Left ventricle myocardium superior (tissue), 1 donor: ENCODE measurements at regions of chr2 and their contacts with region 1.

Region 1: GRCh38 chr2:235779444-235779896 is 285.6 kb downstream of the AGAP1 start:
- DNase-seq: peak; percentile 80
- ATAC-seq: peak; percentile 91

Region 2: DNA sequence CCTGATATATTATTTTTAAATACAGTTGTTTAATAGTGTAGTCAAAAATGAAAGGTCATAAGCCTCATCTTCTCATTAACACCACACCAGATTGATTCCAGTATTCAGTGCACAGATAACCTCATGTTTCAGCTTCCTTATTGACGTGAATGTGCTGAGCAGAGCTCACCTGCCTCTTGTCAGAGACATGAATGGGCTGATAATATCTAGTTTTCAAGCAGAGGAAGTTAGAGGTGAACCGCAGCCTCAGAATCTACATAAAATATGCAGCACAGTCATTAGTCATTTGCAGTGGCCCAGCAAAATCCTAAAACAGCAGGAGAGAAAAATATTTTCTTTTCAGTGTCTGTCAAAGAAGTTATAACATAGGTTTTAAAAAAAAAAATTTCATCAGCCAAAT is 172.5 kb after region 1 on chr2:
- intact Hi-C with region 1: no loop called
- DNase-seq: no peak
- ATAC-seq: no peak

Region 3: DNA sequence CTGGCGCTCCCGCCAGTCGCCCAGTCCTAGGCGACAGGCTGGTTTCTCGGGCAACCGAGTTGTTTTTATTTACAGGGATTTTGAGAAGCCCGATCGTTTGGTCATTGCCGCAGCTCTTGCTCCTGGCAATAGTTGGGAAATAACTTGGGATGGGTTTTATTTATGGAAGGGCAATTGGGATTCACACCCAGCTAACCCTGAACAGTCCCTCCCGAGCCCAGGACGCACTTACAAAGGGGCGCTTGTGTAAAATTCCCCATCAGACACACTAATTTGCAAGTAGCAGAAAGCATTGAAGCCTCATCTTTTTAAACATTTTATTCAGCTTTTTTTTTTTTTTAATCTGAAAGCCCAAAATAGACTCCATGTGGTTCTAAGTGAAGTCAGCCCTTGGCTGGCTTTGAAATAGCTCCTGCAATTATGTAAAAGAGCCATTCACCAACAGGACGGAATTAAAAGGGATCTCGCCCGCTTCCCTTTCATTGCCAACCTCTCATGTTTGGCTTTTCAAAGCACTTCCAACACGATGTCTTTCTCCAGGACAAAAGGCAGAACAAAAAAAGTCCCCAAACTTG is 392.3 kb after region 1 on chr2:
- intact Hi-C with region 1: loop called (anchors 5 kb)
- DNase-seq: no peak
- ATAC-seq: no peak